Gastrocnemius medialis (tissue), 4 donors: ENCODE measurements at regions of chr2 and their contacts with region 1.

Region 1: DNA sequence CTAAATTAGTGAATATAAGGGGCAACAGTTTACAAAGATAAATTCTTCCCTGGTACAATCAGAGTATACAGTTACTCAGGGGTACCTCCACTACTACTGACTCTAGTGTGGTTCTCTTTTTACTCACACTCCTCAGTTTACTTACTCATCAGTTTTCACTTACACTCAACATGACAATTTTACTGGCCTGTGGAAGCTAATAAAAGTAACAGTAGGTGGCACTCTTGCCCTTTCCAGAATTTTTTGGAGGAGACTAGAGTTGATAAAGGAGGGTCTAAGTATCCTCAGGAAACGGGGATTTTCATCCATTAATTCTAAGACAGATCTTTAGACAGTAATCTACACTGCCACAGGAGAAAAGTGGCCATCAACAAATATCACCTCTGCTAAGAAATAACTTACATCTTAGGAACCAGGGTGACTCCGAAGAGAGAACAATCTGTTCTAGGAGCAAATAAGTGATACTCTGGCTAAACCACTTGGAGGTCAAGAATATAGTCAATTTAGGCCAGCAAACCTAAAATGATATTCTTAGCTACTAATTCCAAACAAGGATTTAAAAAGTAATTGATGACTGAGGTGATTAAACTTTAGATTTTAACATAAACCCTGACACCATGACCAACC is 61.3 kb downstream of the ATL2 start:
- DNase-seq: no peak
- ATAC-seq: peak; percentile 72 to 79
- H3K4me3 ChIP-seq: no peak overlapping the region
- H3K27ac ChIP-seq: peak overlapping the region in 1 of 4 donors; percentile 6
- H3K4me1 ChIP-seq: peaks cover 0 to 3% of the 10 kb centered on the region in 2 donors
- H3K27me3 ChIP-seq: no peaks in the 10 kb centered on the region
- CTCF ChIP-seq: peak; percentile 42 to 79 (median 70)
- POLR2A ChIP-seq: no peak

Region 2: DNA sequence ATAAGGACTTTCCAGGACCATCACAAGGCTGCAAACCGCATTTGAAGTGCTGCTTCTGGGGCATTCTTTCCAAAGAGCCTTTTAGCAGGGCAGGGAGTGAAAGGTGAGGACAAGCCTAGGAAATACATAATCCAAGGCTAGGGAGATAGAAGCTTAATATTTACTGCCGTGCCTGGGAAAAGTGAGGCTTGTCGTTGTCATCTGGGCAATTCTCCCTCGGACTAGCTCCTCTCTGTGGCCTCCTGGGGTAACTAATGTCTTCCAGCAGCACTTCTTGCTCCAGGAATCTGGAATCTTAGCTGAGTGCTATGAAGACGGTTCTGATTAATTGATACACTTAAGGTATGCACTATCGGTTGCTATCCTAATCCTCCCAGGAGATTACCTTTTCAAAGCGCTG is 130.6 kb after region 1 on chr2:
- in situ Hi-C with region 1: no loop called
- intact Hi-C with region 1: loop called (anchors 5 kb)
- DNase-seq: no peak
- ATAC-seq: no peak
- H3K4me3 ChIP-seq: no peak overlapping the region
- H3K27ac ChIP-seq: no peak overlapping the region
- H3K4me1 ChIP-seq: peaks cover 15 to 17% of the 10 kb centered on the region in 2 donors
- H3K27me3 ChIP-seq: no peaks in the 10 kb centered on the region
- CTCF ChIP-seq: peak in 1 of 5 experiments; percentile 28
- POLR2A ChIP-seq: no peak

Region 3: DNA sequence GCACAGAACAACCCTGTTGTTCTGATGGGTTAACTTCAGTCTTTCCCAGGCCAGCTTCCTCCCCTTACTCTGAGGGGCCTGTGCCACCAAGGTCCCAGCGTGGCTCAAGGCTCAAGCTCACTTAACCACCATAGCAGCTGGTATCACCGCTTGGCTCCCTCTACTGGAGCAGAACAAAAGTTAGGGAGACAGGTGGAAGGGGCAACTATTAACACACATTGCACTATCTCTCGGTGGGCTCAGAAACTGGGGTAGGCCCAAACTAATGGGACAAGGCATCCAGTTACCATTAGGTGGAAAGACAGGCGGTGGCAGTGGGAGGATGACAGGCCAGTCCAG is 149.9 kb after region 1 on chr2:
- in situ Hi-C with region 1: loop called in 1 of 4 experiments (anchors 5 kb)
- intact Hi-C with region 1: loop called (anchors 5 kb)
- DNase-seq: peak in 1 of 2 donors; percentile 11
- ATAC-seq: peak; percentile 48 to 63
- H3K4me3 ChIP-seq: no peak overlapping the region
- H3K27ac ChIP-seq: no peak overlapping the region
- H3K4me1 ChIP-seq: no peaks in the 10 kb centered on the region
- H3K27me3 ChIP-seq: no peaks in the 10 kb centered on the region
- CTCF ChIP-seq: peak in 3 of 5 experiments; percentile 18 to 40 (median 29)
- POLR2A ChIP-seq: no peak

Region 4: GRCh38 chr2:38535744-38536506 is 220.1 kb after region 1 on chr2:
- in situ Hi-C with region 1: loop called in 3 of 4 experiments (anchors 25 kb)
- intact Hi-C with region 1: loop called (anchors 1 kb)
- DNase-seq: peak; percentile 52 to 64
- ATAC-seq: peak; percentile 86 to 90
- H3K4me3 ChIP-seq: peak overlapping the region; percentile 54 to 75 (median 55)
- H3K27ac ChIP-seq: peak overlapping the region in 2 of 4 donors; percentile 51 to 55
- H3K4me1 ChIP-seq: no peaks in the 10 kb centered on the region
- H3K27me3 ChIP-seq: no peaks in the 10 kb centered on the region
- CTCF ChIP-seq: peak; percentile 79 to 95 (median 92)
- POLR2A ChIP-seq: no peak

Region 5: GRCh38 chr2:38720613-38721241 is 404.9 kb after region 1 on chr2:
- in situ Hi-C with region 1: loop called in 3 of 4 experiments (anchors 25 kb)
- intact Hi-C with region 1: loop called (anchors 10 kb)
- DNase-seq: peak; percentile 79 to 88
- ATAC-seq: peak; percentile 76 to 91
- H3K4me3 ChIP-seq: no peak overlapping the region
- H3K27ac ChIP-seq: peak overlapping the region; percentile 76 to 90 (median 88)
- H3K4me1 ChIP-seq: peaks cover 29 to 32% of the 10 kb centered on the region in 2 donors
- H3K27me3 ChIP-seq: no peaks in the 10 kb centered on the region
- CTCF ChIP-seq: no peak
- POLR2A ChIP-seq: no peak

Region 6: GRCh38 chr2:38734299-38735058 is 418.7 kb after region 1 on chr2:
- in situ Hi-C with region 1: loop called (anchors 10 to 25 kb)
- intact Hi-C with region 1: loop called (anchors 10 kb)
- DNase-seq: no peak
- ATAC-seq: no peak
- H3K4me3 ChIP-seq: no peak overlapping the region
- H3K27ac ChIP-seq: peak overlapping the region in 1 of 4 donors; percentile 18
- H3K4me1 ChIP-seq: peaks cover 0 to 8% of the 10 kb centered on the region in 2 donors
- H3K27me3 ChIP-seq: no peaks in the 10 kb centered on the region
- CTCF ChIP-seq: no peak
- POLR2A ChIP-seq: no peak

Region 7: DNA sequence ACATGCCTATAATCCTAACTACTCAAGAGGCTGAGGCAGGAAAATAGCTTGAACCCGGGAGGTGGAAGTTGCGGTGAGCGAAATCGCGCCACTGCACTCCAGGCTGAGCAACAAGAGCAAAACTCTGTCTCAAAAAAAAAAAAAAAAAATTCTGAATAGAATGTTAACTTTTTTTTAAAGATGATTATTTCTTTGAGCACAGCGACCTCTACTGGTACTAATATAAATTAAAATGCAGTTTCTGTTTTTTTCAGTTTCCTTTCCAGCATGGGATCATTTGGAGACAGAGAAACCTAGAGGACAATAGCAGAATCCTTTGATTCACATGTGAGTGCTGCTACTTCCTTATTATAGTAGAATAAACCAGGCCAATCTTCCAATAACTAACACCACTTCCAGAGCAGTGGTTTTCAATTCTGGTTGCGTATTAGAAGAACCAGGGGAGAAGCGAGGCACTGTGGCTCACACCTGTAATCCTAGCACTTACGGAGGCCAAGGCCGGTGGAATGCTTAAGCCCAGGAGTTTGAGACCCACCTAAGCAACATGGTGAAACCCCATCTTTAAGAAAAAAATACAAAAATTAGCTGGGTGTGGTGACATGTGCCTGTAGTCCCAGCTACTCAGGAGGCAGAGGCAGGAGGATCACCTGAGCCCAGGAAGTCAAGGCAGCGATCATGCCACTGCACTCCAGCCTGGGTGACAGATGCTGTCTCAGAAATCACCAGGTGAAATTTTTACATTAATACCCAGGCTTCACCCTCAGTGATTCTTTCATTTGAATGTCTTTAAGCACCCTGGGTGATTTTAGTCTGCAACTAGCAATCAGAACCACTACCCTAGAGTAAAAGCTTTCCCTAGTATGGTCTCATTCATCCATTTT is 425.3 kb after region 1 on chr2:
- in situ Hi-C with region 1: loop called (anchors 10 to 25 kb)
- intact Hi-C with region 1: no loop called
- DNase-seq: no peak
- ATAC-seq: peak in 1 of 2 donors; percentile 39
- H3K4me3 ChIP-seq: no peak overlapping the region
- H3K27ac ChIP-seq: peak overlapping the region; percentile 25 to 77 (median 52)
- H3K4me1 ChIP-seq: peaks cover 8 to 28% of the 10 kb centered on the region in 2 donors
- H3K27me3 ChIP-seq: no peaks in the 10 kb centered on the region
- CTCF ChIP-seq: peak; percentile 55 to 78 (median 67)
- POLR2A ChIP-seq: no peak